Activated CD8-positive, alpha-beta T cell treated with anti-CD3 and anti-CD28 coated beads, Interleukin-2, amount 10 ng/mL, durations not matched to agents 7 days and 5 days (primary cell): ENCODE measurements at regions of chr1 and their contacts with region 1.

Region 1: GRCh38 chr1:151098126-151098525 is 27.6 kb downstream of the GABPB2 start:
- DNase-seq: no peak
- ATAC-seq: no peak
- H3K4me3 Mint-ChIP-seq: no peak overlapping the region
- H3K27ac Mint-ChIP-seq: no peak overlapping the region
- H3K4me1 Mint-ChIP-seq: no peaks in the 10 kb centered on the region
- H3K27me3 Mint-ChIP-seq: no peaks in the 10 kb centered on the region

Region 2: DNA sequence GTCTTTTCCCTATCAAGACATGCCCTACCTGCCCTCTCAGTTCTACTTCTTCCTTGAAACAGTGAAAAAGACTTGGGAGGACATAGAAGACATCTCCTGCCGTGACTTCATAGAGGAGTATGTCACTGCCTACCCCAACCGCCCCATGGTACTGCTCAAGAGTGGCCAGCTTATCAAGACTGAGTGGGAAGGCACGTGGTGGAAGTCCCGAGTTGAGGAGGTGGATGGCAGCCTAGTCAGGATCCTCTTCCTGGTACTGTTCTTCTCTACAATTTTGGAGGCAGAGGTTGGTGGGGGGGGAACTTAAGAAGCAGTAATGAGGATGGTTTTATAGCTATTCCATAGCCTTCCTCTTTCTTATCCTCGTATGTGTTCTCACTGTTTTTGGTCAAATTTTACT is 153.3 kb before region 1 on chr1:
- CTCF ChIA-PET with region 1: no interaction called
- POLR2A ChIA-PET with region 1: no interaction called
- DNase-seq: no peak
- ATAC-seq: no peak
- H3K4me3 Mint-ChIP-seq: no peak overlapping the region
- H3K27ac Mint-ChIP-seq: no peak overlapping the region
- H3K4me1 Mint-ChIP-seq: no peaks in the 10 kb centered on the region
- H3K27me3 Mint-ChIP-seq: no peaks in the 10 kb centered on the region

Region 3: DNA sequence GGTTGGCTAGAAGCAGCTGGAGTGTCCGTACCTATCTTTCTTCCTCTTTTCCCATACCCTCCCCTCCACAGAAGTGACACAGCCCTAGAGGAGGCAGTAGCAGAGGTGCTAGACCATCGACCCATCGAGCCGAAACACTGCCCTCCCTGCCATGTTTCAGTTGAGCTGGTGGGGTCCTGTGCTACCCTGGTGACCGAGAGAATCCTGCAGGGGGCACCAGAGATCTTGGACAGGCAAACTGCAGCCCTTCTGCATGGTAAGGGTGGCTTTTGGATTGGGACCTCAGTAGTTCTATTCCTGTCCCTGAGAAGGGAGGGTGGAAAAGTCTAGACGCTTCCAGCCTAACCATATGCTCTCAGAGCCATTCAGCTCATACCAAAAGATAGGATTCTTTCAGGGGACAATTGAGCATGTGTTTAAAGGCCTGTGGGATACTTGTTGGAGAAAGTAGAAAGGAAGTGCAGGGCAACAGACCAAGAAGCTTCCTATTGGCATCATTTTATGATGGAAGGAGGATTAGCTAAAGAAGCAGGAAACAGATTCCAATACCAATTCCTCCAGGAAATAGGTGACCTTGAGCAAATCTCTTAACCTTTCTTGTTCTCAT is 73.5 kb before region 1 on chr1:
- CTCF ChIA-PET with region 1: interaction called, 31 read pairs
- POLR2A ChIA-PET with region 1: no interaction called
- DNase-seq: peak; percentile 92
- ATAC-seq: peak; percentile 100
- H3K4me3 Mint-ChIP-seq: peak overlapping the region; percentile 45
- H3K27ac Mint-ChIP-seq: peak overlapping the region; percentile 74
- H3K4me1 Mint-ChIP-seq: peaks cover 7% of the 10 kb centered on the region
- H3K27me3 Mint-ChIP-seq: no peaks in the 10 kb centered on the region

Region 4: DNA sequence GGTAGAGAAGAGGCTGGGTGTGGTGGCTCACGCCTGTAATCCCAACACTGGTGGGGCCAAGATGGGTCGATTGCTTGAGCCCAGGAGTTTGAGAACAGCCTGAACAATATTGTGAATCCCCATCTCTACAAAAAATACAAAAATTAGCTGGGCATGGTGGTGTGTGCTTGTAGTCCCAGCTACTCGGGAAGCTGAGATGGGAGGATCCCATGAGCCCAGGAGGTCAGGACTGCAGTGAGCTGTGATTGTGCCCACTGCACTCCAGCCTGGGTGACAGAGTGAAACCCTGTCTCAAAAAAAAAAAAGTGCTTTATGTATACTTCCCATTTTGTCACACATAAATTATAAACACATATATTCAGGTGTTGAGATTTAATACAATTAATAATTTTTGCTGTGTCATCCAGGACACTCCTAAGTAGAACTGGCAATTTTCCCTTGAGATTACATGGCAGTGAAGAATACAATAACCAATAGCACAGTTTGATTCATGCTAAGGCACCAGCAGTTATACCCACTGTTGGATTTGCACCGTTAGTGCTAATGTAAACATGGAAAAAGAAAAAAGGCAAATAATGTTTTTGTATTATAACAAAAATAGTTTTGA is 12.1 kb before region 1 on chr1:
- CTCF ChIA-PET with region 1: interaction called, 22 read pairs
- POLR2A ChIA-PET with region 1: no interaction called
- DNase-seq: no peak
- ATAC-seq: no peak
- H3K4me3 Mint-ChIP-seq: no peak overlapping the region
- H3K27ac Mint-ChIP-seq: no peak overlapping the region
- H3K4me1 Mint-ChIP-seq: no peaks in the 10 kb centered on the region
- H3K27me3 Mint-ChIP-seq: no peaks in the 10 kb centered on the region

Region 5: GRCh38 chr1:151146412-151147140 is 48.5 kb after region 1 on chr1 and contains the start of gene SEMA6C:
- CTCF ChIA-PET with region 1: interaction called, 337 read pairs
- POLR2A ChIA-PET with region 1: no interaction called
- DNase-seq: peak; percentile 91
- ATAC-seq: peak; percentile 100
- H3K4me3 Mint-ChIP-seq: peak within 1 kb of the TSS; percentile 81
- H3K27ac Mint-ChIP-seq: peak within 1 kb of the TSS; percentile 28
- H3K4me1 Mint-ChIP-seq: peaks cover 15% of the 10 kb centered on the region
- H3K27me3 Mint-ChIP-seq: peaks cover 13% of the 10 kb centered on the region
- total RNA-seq, gene SEMA6C: 1.9 to 2.2 TPM

Region 6: GRCh38 chr1:151165738-151166505 is 67.8 kb after region 1 on chr1 and contains the starts of genes LYSMD1 and SCNM1:
- CTCF ChIA-PET with region 1: interaction called, 12 read pairs
- POLR2A ChIA-PET with region 1: no interaction called
- DNase-seq: peak; percentile 98
- ATAC-seq: peak; percentile 95
- H3K4me3 Mint-ChIP-seq: peak within 1 kb of the TSS; percentile 92
- H3K27ac Mint-ChIP-seq: peak within 1 kb of the TSS; percentile 94
- H3K4me1 Mint-ChIP-seq: peaks cover 40% of the 10 kb centered on the region
- H3K27me3 Mint-ChIP-seq: no peaks in the 10 kb centered on the region
- total RNA-seq, gene LYSMD1: 3.7 to 4.3 TPM
- total RNA-seq, gene SCNM1: 53.0 to 55.9 TPM

Region 7: GRCh38 chr1:151254217-151255213 is 156.4 kb after region 1 on chr1 and contains the start of gene PSMD4:
- CTCF ChIA-PET with region 1: interaction called, 30 read pairs
- POLR2A ChIA-PET with region 1: no interaction called
- DNase-seq: peak; percentile 96
- ATAC-seq: peak; percentile 97
- H3K4me3 Mint-ChIP-seq: peak within 1 kb of the TSS; percentile 86
- H3K27ac Mint-ChIP-seq: peak within 1 kb of the TSS; percentile 89
- H3K4me1 Mint-ChIP-seq: peaks cover 28% of the 10 kb centered on the region
- H3K27me3 Mint-ChIP-seq: no peaks in the 10 kb centered on the region
- total RNA-seq, gene PSMD4: 194 to 210 TPM